ENCODE measurements at regions of chr11 and their contacts with region 1.

Region 1: GRCh38 chr11:134524896-134525845 is 113.1 kb upstream of the B3GAT1 start:
- DNase-seq: no peak
- H3K4me3 ChIP-seq: no peak overlapping the region
- H3K27ac ChIP-seq: no peak overlapping the region
- H3K4me1 ChIP-seq: no peaks in the 10 kb centered on the region
- H3K27me3 ChIP-seq: no peaks in the 10 kb centered on the region
- CTCF ChIP-seq: no peak

Region 2: GRCh38 chr11:134139873-134140331 is 385.3 kb before region 1 on chr11:
- CTCF ChIA-PET with region 1: no interaction called
- dilution Hi-C with region 1: no loop called
- in situ Hi-C with region 1: no loop called
- intact Hi-C with region 1: no loop called
- DNase-seq: peak; percentile 58
- H3K4me3 ChIP-seq: no peak overlapping the region
- H3K27ac ChIP-seq: no peak overlapping the region
- H3K4me1 ChIP-seq: no peaks in the 10 kb centered on the region
- H3K27me3 ChIP-seq: no peaks in the 10 kb centered on the region
- CTCF ChIP-seq: peak; percentile 90 to 97

Region 3: DNA sequence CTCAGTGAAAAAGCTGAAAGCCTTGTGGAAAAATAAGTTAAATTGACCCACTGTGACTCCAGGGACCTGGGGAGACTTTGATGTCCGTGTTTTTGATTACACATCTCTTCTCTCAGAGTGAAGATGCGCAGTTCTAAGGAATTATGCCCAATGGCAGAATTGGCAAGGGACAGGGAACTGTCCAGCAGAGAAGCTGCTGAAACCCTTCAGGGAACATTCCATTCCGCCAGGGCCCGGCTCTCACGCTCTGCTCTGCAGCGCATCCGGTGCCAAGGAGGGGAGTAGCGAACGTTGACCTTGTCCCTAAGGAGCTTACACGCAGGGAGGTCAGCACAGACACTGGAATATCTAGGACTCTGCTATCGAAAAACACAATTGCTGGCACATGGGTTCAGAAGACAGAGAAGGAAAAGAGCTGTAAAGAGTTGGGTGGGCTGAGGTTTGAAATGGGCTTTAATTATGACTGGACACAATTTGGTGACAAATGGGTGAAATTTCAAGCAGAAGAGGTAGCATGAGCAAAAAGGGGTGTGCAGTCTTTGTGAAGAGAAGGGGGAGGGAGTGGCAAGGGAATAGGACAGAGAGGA is 48.6 kb before region 1 on chr11:
- CTCF ChIA-PET with region 1: no interaction called
- dilution Hi-C with region 1: loop called (anchors 5 kb)
- in situ Hi-C with region 1: no loop called
- intact Hi-C with region 1: no loop called
- DNase-seq: no peak
- H3K4me3 ChIP-seq: no peak overlapping the region
- H3K27ac ChIP-seq: no peak overlapping the region
- H3K4me1 ChIP-seq: no peaks in the 10 kb centered on the region
- H3K27me3 ChIP-seq: no peaks in the 10 kb centered on the region
- CTCF ChIP-seq: no peak

Region 4: GRCh38 chr11:134488913-134489312 is 36.3 kb before region 1 on chr11:
- CTCF ChIA-PET with region 1: no interaction called
- dilution Hi-C with region 1: no loop called
- in situ Hi-C with region 1: no loop called
- intact Hi-C with region 1: no loop called
- DNase-seq: no peak
- H3K4me3 ChIP-seq: no peak overlapping the region
- H3K27ac ChIP-seq: no peak overlapping the region
- H3K4me1 ChIP-seq: no peaks in the 10 kb centered on the region
- H3K27me3 ChIP-seq: no peaks in the 10 kb centered on the region
- CTCF ChIP-seq: no peak

Region 5: DNA sequence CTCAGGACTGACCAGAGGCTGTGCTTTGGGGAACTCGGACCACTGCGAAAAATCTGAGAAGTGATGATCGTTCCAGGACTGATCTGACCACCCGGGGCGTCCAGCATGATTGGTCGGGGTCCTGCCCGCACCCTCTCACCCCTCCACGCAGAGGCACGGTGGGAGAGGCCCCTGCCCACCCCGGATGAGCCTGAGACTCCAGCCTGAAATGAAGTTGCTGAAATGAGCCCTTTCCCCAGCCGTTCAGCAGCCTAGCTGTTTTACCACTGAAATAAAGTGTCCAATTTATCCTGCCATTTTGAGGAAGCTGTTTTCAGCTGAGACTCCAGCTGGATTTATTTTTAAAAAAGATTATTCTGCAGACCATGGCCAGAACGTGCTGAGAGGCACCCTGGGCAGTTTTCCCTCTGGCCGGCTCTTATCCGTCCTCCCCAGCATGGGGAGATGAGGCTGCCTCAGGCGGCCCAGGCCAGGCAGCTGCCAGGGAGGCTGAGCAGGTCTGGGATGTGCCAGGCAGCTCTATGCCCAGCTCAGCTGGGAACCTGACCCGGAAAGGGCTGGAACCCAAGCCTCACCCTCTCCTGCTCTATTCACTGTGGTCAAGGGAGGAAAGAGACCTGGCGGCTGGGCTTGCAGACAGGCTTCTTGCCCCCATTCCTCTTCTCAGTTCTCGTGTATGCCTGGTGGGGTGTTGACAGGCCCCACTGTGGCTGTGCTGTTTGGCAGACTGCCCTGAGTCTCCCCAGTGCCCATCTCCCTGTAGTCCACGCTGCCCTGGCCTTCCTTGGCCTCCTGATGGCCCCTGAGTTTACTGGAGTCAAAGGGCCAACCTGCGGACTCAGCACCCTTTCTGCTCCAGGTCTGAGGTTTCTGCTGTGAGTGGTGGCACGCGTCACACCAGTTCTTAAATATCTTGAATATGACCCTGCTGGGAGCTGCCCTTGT is 47.8 kb after region 1 on chr11:
- CTCF ChIA-PET with region 1: no interaction called
- dilution Hi-C with region 1: loop called (anchors 5 kb)
- in situ Hi-C with region 1: no loop called
- intact Hi-C with region 1: no loop called
- DNase-seq: no peak
- H3K4me3 ChIP-seq: no peak overlapping the region
- H3K27ac ChIP-seq: no peak overlapping the region
- H3K4me1 ChIP-seq: no peaks in the 10 kb centered on the region
- H3K27me3 ChIP-seq: no peaks in the 10 kb centered on the region
- CTCF ChIP-seq: no peak

Measured in mammary epithelial cell (primary cell).